ENCODE measurements at regions of chr20 and their contacts with region 1.

Region 1: GRCh38 chr20:44115762-44116644 is 71.0 kb downstream of the JPH2 start:
- DNase-seq: no peak
- ATAC-seq: peak; percentile 5

Region 2: GRCh38 chr20:44028868-44029847 is 86.8 kb before region 1 on chr20:
- intact Hi-C with region 1: no loop called
- DNase-seq: no peak
- ATAC-seq: no peak

Region 3: GRCh38 chr20:44187051-44187762 is 71.2 kb after region 1 on chr20 and contains the start of gene JPH2:
- intact Hi-C with region 1: loop called (anchors 2 kb)
- DNase-seq: peak; percentile 76
- ATAC-seq: peak; percentile 84
- total RNA-seq, gene JPH2: 181 TPM